K562 (cell line): ENCODE measurements at regions of chr3 and their contacts with region 1.

Region 1: DNA sequence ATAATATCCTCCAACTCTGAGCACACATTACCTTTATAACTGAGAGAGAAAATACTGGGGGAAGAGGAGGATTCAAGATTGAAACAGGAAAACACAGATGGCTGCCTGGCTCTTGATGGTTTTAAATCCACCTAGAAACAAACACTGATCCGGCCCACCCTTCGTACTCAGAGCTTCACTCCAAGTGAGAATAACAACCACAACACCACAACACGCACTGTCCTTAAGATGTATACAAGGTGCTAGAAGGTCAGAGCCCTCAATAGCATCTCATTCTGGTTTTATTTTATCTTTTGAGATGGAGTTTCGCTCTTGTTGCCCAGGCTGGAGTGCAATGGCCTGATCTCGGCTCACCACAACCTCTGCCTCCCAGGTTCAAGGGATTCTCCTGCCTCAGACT is 9.9 kb downstream of the IP6K2 start:
- DNase-seq: no peak
- ATAC-seq: no peak
- H3K4me3 ChIP-seq: no peak overlapping the region
- H3K27ac ChIP-seq: no peak overlapping the region
- H3K4me1 ChIP-seq: no peaks in the 10 kb centered on the region; a peak in 1 of 5 replicates
- H3K27me3 ChIP-seq: no peaks in the 10 kb centered on the region
- CTCF ChIP-seq: no peak
- EP300 ChIP-seq: no peak
- POLR2A ChIP-seq: no peak
- RAD21 ChIP-seq: no peak

Region 2: DNA sequence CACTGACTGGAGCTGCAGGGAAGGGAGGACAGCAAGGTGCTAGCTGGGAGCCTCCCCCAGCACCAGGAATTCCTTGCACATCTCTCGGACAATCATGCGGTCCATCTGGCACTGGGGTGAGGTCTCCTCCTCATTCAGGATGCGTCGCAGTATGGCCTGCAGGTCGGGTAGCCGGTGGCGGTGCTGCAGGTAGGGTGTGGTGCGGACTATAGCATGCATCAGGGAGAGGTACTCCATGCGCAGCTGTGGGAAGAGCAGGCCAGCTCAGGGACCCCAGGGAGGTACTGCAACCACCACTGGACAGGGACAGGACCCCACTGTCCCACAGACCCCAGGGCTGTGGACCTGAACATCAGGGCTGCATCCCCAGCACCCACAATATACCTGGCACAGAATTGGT is 32.7 kb before region 1 on chr3:
- CTCF ChIA-PET with region 1: no interaction called
- POLR2A ChIA-PET with region 1: no interaction called
- in situ Hi-C with region 1: no loop called
- intact Hi-C with region 1: no loop called
- DNase-seq: no peak
- ATAC-seq: no peak
- H3K4me3 ChIP-seq: no peak overlapping the region
- H3K27ac ChIP-seq: no peak overlapping the region
- H3K4me1 ChIP-seq: no peaks in the 10 kb centered on the region; a peak in 1 of 5 replicates
- H3K27me3 ChIP-seq: no peaks in the 10 kb centered on the region
- CTCF ChIP-seq: no peak
- EP300 ChIP-seq: no peak
- POLR2A ChIP-seq: no peak
- RAD21 ChIP-seq: no peak

Region 3: GRCh38 chr3:48716982-48717746 is 10.0 kb after region 1 on chr3 and contains the start of gene IP6K2:
- CTCF ChIA-PET with region 1: no interaction called
- POLR2A ChIA-PET with region 1: interaction called, 13 read pairs
- in situ Hi-C with region 1: no loop called
- intact Hi-C with region 1: no loop called
- DNase-seq: peak; percentile 91 to 96 (median 94)
- ATAC-seq: peak; percentile 100
- H3K4me3 ChIP-seq: peak within 1 kb of the TSS; percentile 98
- H3K27ac ChIP-seq: peak within 1 kb of the TSS; percentile 98
- H3K4me1 ChIP-seq: peaks cover 3 to 9% of the 10 kb centered on the region in 2 experiments; a peak in 4 of 5 replicates
- H3K27me3 ChIP-seq: no peaks in the 10 kb centered on the region
- CTCF ChIP-seq: no peak
- EP300 ChIP-seq: no peak
- POLR2A ChIP-seq: peak; percentile 88
- RAD21 ChIP-seq: no peak
- polyA plus RNA-seq, gene IP6K2: 19.6 to 26.3 TPM